Mucosa of descending colon (tissue), 3 donors: ENCODE measurements at regions of chr17 and their contacts with region 1.

Region 1: DNA sequence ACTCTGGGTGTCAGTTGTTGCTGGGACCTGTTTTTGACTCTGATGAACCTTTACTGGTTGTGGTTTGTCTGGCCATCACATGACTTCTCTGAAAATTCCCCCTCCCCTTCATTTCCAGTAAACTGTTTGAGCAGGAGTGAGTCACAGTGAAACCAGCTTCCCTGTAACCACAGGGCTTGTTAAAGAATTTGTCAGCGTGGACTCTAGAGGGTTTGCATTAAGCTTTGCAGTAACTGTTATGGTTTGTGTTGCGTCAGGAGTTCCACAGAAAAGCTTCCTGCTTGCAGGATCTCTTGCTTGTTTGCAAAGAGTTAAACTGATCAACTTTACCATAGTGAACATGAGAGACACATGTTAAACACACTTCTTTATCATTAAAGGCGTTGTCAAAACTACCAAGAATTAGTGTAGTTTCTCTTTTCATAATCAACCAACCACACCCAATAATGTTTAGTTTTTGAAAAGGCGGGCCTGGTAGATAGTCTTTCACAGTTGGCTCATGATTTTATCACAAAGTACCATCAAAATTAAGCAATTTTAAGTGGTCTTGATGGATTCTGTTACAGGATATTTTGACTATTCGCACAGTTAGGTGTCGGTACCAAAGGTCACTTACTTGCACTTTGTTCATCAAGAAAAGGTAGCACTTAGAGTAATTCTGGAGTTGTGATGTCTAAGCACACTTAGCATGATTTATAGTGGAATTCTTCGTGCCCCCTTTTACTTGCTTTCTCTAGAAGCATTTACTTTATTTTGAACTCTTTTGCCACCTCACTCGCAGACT is 79.3 kb downstream of the VMP1 start:
- DNase-seq: peak in 1 of 3 donors; percentile 82
- ATAC-seq: peak; percentile 96
- H3K4me3 ChIP-seq: no peak overlapping the region
- H3K4me1 ChIP-seq: peaks cover 29% of the 10 kb centered on the region
- CTCF ChIP-seq: no peak

Region 2: DNA sequence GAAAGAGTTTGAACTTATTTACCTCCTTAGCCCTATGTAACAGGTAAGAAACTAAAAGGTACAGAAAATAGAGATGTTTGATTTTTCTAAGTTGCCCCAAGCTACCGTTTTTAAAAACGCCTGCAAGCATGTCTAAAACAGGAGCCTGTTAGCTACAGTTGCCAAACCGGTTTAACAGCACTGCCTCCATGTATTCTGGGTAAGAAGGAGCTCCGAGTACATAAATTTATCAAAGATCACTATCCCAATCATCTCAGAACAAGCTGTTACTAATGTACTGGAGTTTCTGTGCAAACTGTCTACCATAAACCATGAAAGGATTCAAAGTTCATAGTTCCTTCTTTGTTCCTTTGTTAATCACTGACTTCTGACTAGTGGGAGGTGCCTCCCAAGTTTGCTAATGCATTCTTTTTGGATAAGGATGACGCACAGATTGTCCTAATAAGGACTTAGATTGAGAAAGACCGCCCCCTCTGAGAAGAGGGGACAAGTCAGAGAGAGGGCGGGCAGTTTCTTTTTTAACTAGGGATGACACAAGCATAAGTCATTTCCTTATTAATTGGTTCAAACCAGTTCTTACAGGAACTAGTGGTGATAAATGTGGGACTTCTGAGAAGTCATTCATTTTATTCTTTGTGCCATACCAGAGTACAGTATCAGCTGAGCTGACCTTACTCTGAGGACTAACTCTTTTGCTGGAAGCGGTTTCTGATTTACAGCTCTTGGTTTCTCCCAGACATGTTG is 50.8 kb after region 1 on chr17:
- intact Hi-C with region 1: loop called in 1 of 2 experiments (anchors 10 kb)
- DNase-seq: peak in 1 of 3 donors; percentile 88
- ATAC-seq: peak; percentile 84
- H3K4me3 ChIP-seq: peak overlapping the region; percentile 68
- H3K4me1 ChIP-seq: peaks cover 22% of the 10 kb centered on the region
- CTCF ChIP-seq: no peak

Region 3: DNA sequence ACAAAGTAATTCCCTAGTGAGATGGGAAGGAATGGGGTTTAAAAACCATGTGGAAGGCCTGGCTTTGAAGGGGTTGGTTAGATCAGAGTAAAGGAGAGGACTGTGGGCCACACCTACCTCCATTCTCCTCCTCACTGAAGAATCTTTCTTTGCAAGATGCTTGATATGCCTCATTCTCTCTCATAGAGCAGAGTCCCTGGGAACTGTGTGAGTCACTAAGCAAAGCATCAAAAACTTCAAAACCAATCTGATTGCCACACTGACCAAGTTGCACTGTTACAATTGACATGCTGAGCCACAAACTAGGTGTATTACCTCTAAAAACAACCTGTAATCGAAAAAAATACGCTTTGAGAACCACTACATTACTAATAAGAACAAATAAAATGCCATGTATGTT is 104.0 kb after region 1 on chr17:
- intact Hi-C with region 1: no loop called
- DNase-seq: no peak
- ATAC-seq: no peak
- H3K4me3 ChIP-seq: no peak overlapping the region
- H3K4me1 ChIP-seq: peaks cover 20% of the 10 kb centered on the region
- CTCF ChIP-seq: no peak